Vagina (tissue), 2 donors: ENCODE measurements at regions of chr1 and their contacts with region 1.

Region 1: GRCh38 chr1:6727535-6727934 is 25.9 kb upstream of the DNAJC11 start:
- DNase-seq: no peak
- H3K4me3 ChIP-seq: no peak overlapping the region
- H3K27ac ChIP-seq: no peak overlapping the region
- H3K4me1 ChIP-seq: no peaks in the 10 kb centered on the region
- H3K27me3 ChIP-seq: no peaks in the 10 kb centered on the region
- CTCF ChIP-seq: peak in 2 of 3 experiments; percentile 59 to 84
- POLR2A ChIP-seq: no peak

Region 2: GRCh38 chr1:6770751-6771440 is 43.4 kb after region 1 on chr1:
- intact Hi-C with region 1: no loop called
- DNase-seq: peak in 1 of 2 donors; percentile 40
- H3K4me3 ChIP-seq: no peak overlapping the region
- H3K27ac ChIP-seq: no peak overlapping the region
- H3K4me1 ChIP-seq: peaks cover 22% of the 10 kb centered on the region
- H3K27me3 ChIP-seq: no peaks in the 10 kb centered on the region
- CTCF ChIP-seq: no peak
- POLR2A ChIP-seq: no peak

Region 3: GRCh38 chr1:6783936-6784559 is 56.5 kb after region 1 on chr1:
- intact Hi-C with region 1: no loop called
- DNase-seq: no peak
- H3K4me3 ChIP-seq: peak overlapping the region; percentile 71 to 80
- H3K27ac ChIP-seq: peak overlapping the region; percentile 99
- H3K4me1 ChIP-seq: peaks cover 36% of the 10 kb centered on the region
- H3K27me3 ChIP-seq: no peaks in the 10 kb centered on the region
- CTCF ChIP-seq: no peak
- POLR2A ChIP-seq: peak in 1 of 2 donors; percentile 29

Region 4: GRCh38 chr1:7069931-7070330 is 342.4 kb after region 1 on chr1:
- intact Hi-C with region 1: loop called (anchors 5 kb)
- DNase-seq: no peak
- H3K4me3 ChIP-seq: peak overlapping the region; percentile 30 to 32
- H3K27ac ChIP-seq: no peak overlapping the region
- H3K4me1 ChIP-seq: peaks cover 9% of the 10 kb centered on the region
- H3K27me3 ChIP-seq: no peaks in the 10 kb centered on the region
- CTCF ChIP-seq: no peak
- POLR2A ChIP-seq: no peak

Region 5: DNA sequence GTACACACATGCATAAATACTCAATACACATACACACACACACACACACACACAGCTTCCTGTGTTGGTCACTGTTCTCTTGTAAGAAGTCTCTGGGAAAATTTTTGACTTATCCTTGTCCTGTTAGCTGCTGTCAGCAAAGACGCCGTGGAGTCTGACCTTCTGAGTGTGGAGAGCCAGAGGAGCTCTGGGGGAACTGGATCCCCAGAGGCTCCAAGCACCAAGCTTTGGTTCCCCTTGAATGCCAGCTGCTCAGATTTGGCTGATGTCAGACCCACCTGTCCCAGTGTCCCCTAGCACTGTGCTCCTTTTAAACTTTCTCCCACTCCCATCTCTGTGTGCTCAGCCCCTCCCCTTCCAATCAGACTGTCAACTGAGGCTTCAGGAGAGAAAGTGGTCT is 376.8 kb after region 1 on chr1:
- intact Hi-C with region 1: no loop called
- DNase-seq: no peak
- H3K4me3 ChIP-seq: no peak overlapping the region
- H3K27ac ChIP-seq: no peak overlapping the region
- H3K4me1 ChIP-seq: no peaks in the 10 kb centered on the region
- H3K27me3 ChIP-seq: no peaks in the 10 kb centered on the region
- CTCF ChIP-seq: no peak
- POLR2A ChIP-seq: no peak

Region 6: DNA sequence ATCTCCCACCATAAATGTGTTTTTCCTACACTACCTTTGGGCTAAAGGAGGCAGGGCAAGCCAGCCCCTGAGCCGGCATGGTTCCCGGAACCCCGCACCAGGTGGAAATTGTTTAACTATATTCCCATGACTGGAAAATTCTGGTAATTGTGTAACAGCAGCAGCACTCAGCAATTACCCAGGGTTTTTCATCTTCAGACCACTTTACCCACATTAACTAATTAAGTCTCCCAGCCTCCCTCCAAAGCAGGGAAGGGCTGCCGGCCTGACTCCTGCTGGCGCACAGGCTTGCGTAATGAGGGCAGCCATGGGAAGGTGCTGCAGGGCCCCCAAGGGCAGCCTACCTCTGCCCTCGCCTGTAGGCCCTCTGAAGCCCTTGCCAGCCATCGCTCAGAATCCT is 902.8 kb after region 1 on chr1:
- intact Hi-C with region 1: loop called (anchors 10 kb)
- DNase-seq: no peak
- H3K4me3 ChIP-seq: no peak overlapping the region
- H3K27ac ChIP-seq: no peak overlapping the region
- H3K4me1 ChIP-seq: no peaks in the 10 kb centered on the region
- H3K27me3 ChIP-seq: no peaks in the 10 kb centered on the region
- CTCF ChIP-seq: no peak
- POLR2A ChIP-seq: no peak